Activated CD8-positive, alpha-beta T cell treated with anti-CD3 and anti-CD28 coated beads for 36 hours (primary cell): ENCODE measurements at regions of chr5 and their contacts with region 1.

Region 1: DNA sequence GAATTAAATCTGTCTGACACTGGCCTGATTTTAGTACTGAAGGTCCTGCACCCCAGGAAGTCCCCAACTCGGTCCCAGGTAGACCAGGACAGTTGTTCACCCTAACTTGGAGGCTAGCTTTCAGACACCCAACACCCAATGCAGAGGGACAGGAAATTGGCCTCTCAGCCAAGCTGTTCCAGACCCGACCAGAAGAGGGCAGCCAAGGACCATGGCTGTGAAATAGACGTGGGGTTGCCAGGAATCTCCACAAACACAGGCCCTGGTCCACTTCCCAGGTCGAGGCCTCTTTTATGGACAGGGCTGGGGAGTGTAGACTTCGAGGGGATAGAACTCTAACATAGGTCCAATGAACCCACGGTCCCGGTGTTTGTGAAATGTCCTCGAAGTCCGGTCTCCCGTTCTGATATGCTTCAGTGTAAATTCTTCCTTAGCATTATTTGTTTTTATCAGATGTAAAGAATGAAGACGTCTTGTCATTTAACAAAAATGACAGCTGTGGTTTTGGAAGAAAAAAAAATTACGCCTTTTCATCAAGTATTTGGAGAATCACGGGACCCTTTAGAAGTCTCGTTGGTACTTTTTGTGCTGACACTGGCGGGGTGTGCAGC is 260.3 kb upstream of the ADAMTS16 start:
- DNase-seq: peak; percentile 66
- ATAC-seq: peak; percentile 76
- H3K4me3 Mint-ChIP-seq: no peak overlapping the region
- H3K27ac Mint-ChIP-seq: no peak overlapping the region
- H3K4me1 Mint-ChIP-seq: no peaks in the 10 kb centered on the region
- H3K27me3 Mint-ChIP-seq: no peaks in the 10 kb centered on the region
- CTCF ChIP-seq: peak; percentile 79

Region 2: DNA sequence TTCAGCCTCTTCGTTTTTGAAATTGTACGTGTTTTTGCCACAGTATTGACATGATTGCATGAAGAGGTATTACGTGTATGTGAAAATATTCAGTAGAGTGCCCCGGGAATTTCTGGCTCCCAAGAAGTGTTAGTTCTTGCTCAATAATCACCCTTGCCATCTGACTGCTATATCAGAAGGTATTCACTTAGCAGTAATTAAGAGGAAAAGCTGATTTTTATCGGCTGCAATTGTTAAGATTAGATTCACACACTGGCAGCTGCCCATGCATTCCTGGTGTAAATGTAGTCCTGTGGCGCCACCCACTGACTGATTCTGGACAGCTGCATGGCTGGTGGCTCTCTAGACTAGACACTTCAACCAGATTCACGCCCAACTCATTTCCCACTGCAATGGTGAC is 179.7 kb before region 1 on chr5:
- CTCF ChIA-PET with region 1: no interaction called
- POLR2A ChIA-PET with region 1: no interaction called
- intact Hi-C with region 1: no loop called
- DNase-seq: peak; percentile 42
- ATAC-seq: no peak
- H3K4me3 Mint-ChIP-seq: no peak overlapping the region
- H3K27ac Mint-ChIP-seq: no peak overlapping the region
- H3K4me1 Mint-ChIP-seq: no peaks in the 10 kb centered on the region
- H3K27me3 Mint-ChIP-seq: no peaks in the 10 kb centered on the region
- CTCF ChIP-seq: peak; percentile 17

Region 3: DNA sequence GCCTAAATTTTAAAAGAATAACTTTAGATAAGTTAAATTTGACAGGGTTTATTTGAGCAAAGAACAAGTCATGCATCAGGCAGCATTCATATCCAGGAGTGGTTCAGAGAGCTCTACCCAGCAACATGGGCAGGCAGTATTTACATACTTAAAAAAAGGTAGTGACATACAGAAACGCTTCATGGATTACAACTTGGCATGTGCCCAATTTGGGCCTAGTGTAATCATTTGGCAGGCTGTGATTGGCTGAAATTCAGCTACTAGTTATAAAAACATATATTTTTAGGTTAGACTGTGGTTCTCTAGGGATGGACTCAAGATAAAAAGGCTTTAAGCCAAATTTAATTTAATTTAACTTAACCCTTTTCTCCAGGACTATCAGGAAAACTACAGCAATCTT is 113.7 kb before region 1 on chr5:
- CTCF ChIA-PET with region 1: no interaction called
- POLR2A ChIA-PET with region 1: no interaction called
- intact Hi-C with region 1: no loop called
- DNase-seq: no peak
- ATAC-seq: no peak
- H3K4me3 Mint-ChIP-seq: no peak overlapping the region
- H3K27ac Mint-ChIP-seq: no peak overlapping the region
- H3K4me1 Mint-ChIP-seq: no peaks in the 10 kb centered on the region
- H3K27me3 Mint-ChIP-seq: no peaks in the 10 kb centered on the region
- CTCF ChIP-seq: no peak

Region 4: GRCh38 chr5:4855880-4856279 is 23.9 kb before region 1 on chr5:
- CTCF ChIA-PET with region 1: no interaction called
- POLR2A ChIA-PET with region 1: no interaction called
- intact Hi-C with region 1: no loop called
- DNase-seq: no peak
- ATAC-seq: no peak
- H3K4me3 Mint-ChIP-seq: no peak overlapping the region
- H3K27ac Mint-ChIP-seq: no peak overlapping the region
- H3K4me1 Mint-ChIP-seq: no peaks in the 10 kb centered on the region
- H3K27me3 Mint-ChIP-seq: no peaks in the 10 kb centered on the region
- CTCF ChIP-seq: no peak

Region 5: GRCh38 chr5:4868109-4868735 is 11.6 kb before region 1 on chr5:
- CTCF ChIA-PET with region 1: no interaction called
- POLR2A ChIA-PET with region 1: no interaction called
- intact Hi-C with region 1: no loop called
- DNase-seq: peak; percentile 65
- ATAC-seq: no peak
- H3K4me3 Mint-ChIP-seq: no peak overlapping the region
- H3K27ac Mint-ChIP-seq: no peak overlapping the region
- H3K4me1 Mint-ChIP-seq: no peaks in the 10 kb centered on the region
- H3K27me3 Mint-ChIP-seq: no peaks in the 10 kb centered on the region
- CTCF ChIP-seq: peak; percentile 79

Region 6: DNA sequence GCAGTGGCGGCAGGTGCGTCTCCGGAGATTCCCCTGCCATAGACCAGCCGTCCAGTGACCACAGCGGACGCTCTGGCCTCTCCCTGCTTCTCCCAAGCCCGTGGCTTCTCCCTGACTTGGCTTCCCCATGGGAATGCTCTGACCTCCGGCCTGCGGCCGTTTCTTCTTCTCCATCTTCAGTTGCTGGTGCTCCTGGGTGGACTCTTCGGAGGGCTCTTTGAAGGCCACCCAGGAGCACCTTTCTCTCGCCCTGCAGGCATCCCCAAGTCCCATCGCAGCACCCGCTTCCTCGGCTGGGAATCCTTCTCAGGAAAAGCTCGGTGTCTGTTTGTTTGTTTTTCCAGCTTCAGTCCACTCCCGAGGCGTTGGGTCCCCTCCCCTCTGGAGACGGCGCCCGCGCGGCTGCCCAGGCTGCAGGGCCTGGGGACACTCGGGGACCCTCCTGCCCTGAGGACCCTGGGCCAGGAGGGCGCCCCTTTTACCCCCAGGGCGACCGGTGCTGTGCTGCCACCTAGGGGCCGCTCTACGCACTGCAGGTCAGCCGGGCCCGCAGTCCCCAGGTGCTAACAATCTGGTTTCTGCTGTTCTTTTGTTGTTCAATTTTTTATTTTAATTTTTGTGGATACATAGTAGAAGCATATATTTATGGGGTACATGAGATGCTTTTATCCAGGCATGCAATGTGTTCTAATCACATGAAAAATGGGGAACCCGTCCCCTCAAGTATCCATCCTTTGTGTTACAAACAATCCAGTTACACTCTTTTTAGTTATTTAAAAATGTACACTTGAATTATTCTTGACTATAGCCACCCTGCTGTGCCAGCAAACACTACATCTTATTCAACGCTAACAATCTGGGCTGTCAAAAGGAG is 62.4 kb after region 1 on chr5:
- CTCF ChIA-PET with region 1: interaction called, 11 read pairs
- POLR2A ChIA-PET with region 1: no interaction called
- intact Hi-C with region 1: no loop called
- DNase-seq: peak; percentile 28
- ATAC-seq: no peak
- H3K4me3 Mint-ChIP-seq: no peak overlapping the region
- H3K27ac Mint-ChIP-seq: no peak overlapping the region
- H3K4me1 Mint-ChIP-seq: no peaks in the 10 kb centered on the region
- H3K27me3 Mint-ChIP-seq: no peaks in the 10 kb centered on the region
- CTCF ChIP-seq: peak; percentile 91